Right cardiac atrium (tissue), 5 donors: ENCODE measurements at regions of chr5 and their contacts with region 1.

Region 1: DNA sequence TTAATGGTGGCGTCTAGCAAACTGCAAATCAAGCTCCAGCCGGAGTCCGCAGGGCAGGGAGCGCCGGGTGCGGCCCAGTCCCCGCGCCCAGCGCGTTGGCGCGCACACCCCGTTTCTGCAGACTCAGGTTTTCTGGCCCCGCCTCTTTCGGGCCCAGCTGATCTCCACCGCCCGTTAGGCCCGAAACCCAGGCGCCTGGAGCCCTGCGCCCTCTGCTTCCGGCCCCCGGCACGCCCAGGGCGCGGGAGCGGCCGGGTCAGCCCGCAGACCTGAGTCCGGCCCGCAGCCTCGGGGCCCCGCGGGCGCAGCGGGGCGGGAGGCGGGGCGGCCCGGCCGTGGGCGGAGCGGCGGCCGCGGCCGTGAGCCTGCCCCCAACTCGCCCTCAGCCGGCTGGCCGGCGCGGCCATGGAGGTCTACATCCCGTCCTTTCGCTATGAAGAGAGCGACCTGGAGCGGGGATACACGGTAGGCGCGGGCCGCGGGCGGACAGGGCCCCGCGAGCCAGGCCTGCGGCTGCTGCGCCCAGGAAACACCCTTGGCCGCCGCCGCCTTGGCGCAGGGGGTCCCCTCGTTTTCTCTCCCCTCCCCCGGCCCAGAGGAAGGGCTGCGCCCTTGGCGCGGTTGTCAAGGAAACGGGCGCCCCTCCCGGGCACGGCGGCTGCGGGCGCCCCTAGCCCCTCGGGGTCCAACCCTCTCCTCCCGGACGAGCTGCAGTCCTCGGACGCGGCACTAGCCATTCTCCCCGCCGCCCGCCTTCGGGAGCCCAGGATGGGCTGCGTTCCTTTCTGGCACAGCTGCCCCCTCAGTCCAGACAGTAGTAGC is at the start of gene SNX24:
- DNase-seq: peak; percentile 87 to 95 (median 93)
- ATAC-seq: peak; percentile 95 to 96
- H3K4me3 ChIP-seq: peak within 1 kb of the TSS; percentile 80
- H3K27ac ChIP-seq: peak within 1 kb of the TSS; percentile 87
- H3K4me1 ChIP-seq: peaks cover 3% of the 10 kb centered on the region
- H3K27me3 ChIP-seq: no peaks in the 10 kb centered on the region
- total RNA-seq, gene SNX24: 11.5 to 14.9 (median 13.8) TPM

Region 2: GRCh38 chr5:123036391-123037103 is 191.1 kb after region 1 on chr5 and contains the start of gene PPIC:
- intact Hi-C with region 1: loop called in 1 of 4 experiments (anchors 10 kb)
- DNase-seq: peak; percentile 93 to 95 (median 95)
- ATAC-seq: peak; percentile 97 to 98
- H3K4me3 ChIP-seq: peak within 1 kb of the TSS; percentile 86
- H3K27ac ChIP-seq: peak within 1 kb of the TSS; percentile 88
- H3K4me1 ChIP-seq: peaks cover 3% of the 10 kb centered on the region
- H3K27me3 ChIP-seq: no peaks in the 10 kb centered on the region
- total RNA-seq, gene PPIC: 41.8 to 51.3 (median 42.8) TPM